ENCODE measurements at regions of chr14 and their contacts with region 1.

Region 1: DNA sequence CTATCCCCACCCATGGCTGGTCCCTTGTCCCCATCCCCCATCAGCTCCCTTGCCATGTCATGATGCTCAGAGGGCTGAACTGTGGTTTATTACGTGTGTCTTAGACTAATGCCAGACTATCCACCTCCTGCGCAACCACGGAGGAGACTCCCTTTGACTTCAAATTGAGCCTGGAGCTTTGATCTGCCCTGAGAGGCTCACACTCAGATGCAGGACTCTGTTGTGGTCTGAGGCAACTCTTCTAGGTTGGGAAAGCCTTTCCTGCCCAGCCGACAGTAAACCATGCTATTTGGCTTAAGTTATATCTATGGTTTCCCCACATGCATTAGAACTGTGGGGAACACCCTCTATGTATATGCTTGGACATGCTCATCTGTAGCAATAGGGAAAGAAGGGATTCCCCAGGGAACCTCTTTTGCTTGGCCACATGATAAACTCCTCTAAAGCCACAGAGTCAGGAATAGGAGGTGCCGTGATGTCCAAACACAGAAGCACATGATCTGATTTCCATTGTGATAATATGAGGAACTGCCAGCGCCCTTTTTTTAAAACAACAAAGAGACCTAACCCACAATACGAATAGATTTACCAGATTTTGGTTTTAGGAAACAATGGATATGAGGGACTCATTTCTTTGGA is 11.1 kb upstream of the LGALS3 start:
- DNase-seq: no peak
- H3K4me3 ChIP-seq: no peak overlapping the region
- H3K27ac ChIP-seq: no peak overlapping the region
- H3K4me1 ChIP-seq: peaks cover 0 to 3% (median 1%) of the 10 kb centered on the region in 4 experiments; a peak in 3 of 7 replicates
- H3K27me3 ChIP-seq: no peaks in the 10 kb centered on the region; a peak in 1 of 7 replicates
- CTCF ChIP-seq: no peak
- EP300 ChIP-seq: no peak
- POLR2A ChIP-seq: no peak
- RAD21 ChIP-seq: no peak

Region 2: GRCh38 chr14:55074662-55075061 is 43.3 kb before region 1 on chr14:
- CTCF ChIA-PET with region 1: no interaction called
- POLR2A ChIA-PET with region 1: no interaction called
- DNase-seq: peak in 1 of 2 experiments; percentile 43
- H3K4me3 ChIP-seq: no peak overlapping the region
- H3K27ac ChIP-seq: no peak overlapping the region
- H3K4me1 ChIP-seq: peaks cover 0 to 4% (median 1%) of the 10 kb centered on the region in 4 experiments; a peak in 4 of 7 replicates
- H3K27me3 ChIP-seq: no peaks in the 10 kb centered on the region
- CTCF ChIP-seq: no peak
- EP300 ChIP-seq: no peak
- POLR2A ChIP-seq: no peak
- RAD21 ChIP-seq: no peak

Region 3: DNA sequence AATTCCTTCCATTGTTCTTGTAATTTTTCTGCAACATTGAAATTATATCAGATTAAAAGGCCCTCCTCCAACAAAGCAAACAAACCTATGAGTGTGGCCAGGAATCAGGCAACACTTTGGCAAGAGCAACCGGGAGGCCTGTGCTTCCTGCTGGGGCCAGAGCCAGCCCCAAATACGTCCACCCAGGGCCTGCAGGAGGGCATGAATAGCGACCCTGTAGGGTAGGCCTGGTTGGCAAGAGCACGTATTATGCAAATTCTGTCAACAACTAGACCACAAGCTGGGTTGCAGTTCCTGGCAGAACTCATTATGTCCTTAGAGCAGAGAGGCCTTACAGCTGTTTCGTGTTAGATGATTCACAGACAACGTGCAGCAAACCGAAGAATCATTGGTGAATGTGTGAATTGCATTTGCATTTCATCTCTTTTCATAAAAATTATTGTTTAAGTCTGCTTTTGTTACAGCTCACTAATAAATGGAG is 15.7 kb before region 1 on chr14:
- CTCF ChIA-PET with region 1: interaction called, 3 read pairs
- POLR2A ChIA-PET with region 1: interaction called, 15 read pairs
- DNase-seq: peak in 1 of 2 experiments; percentile 49
- H3K4me3 ChIP-seq: peak overlapping the region in 1 of 4 experiments; percentile 34; a peak in 2 of 8 replicates
- H3K27ac ChIP-seq: no peak overlapping the region
- H3K4me1 ChIP-seq: peaks cover 7 to 19% (median 12%) of the 10 kb centered on the region in 4 experiments; a peak in 5 of 7 replicates
- H3K27me3 ChIP-seq: no peaks in the 10 kb centered on the region
- CTCF ChIP-seq: no peak
- EP300 ChIP-seq: no peak
- POLR2A ChIP-seq: peak in 1 of 2 experiments; percentile 49; a peak in 1 of 3 replicates
- RAD21 ChIP-seq: no peak

Region 4: GRCh38 chr14:55146425-55146824 is 28.5 kb after region 1 on chr14:
- CTCF ChIA-PET with region 1: no interaction called
- POLR2A ChIA-PET with region 1: no interaction called
- DNase-seq: no peak
- H3K4me3 ChIP-seq: no peak overlapping the region
- H3K27ac ChIP-seq: no peak overlapping the region
- H3K4me1 ChIP-seq: no peaks in the 10 kb centered on the region
- H3K27me3 ChIP-seq: no peaks in the 10 kb centered on the region
- CTCF ChIP-seq: no peak
- EP300 ChIP-seq: no peak
- POLR2A ChIP-seq: no peak
- RAD21 ChIP-seq: no peak

Region 5: GRCh38 chr14:55160989-55161388 is 43.1 kb after region 1 on chr14:
- CTCF ChIA-PET with region 1: no interaction called
- POLR2A ChIA-PET with region 1: no interaction called
- DNase-seq: no peak
- H3K4me3 ChIP-seq: no peak overlapping the region
- H3K27ac ChIP-seq: no peak overlapping the region
- H3K4me1 ChIP-seq: no peaks in the 10 kb centered on the region
- H3K27me3 ChIP-seq: no peaks in the 10 kb centered on the region
- CTCF ChIP-seq: no peak
- EP300 ChIP-seq: no peak
- POLR2A ChIP-seq: no peak
- RAD21 ChIP-seq: peak in 1 of 2 experiments; percentile 18; a peak in 1 of 4 replicates

Region 6: GRCh38 chr14:55306938-55307589 is 189.1 kb after region 1 on chr14:
- CTCF ChIA-PET with region 1: no interaction called
- POLR2A ChIA-PET with region 1: no interaction called
- DNase-seq: no peak
- H3K4me3 ChIP-seq: no peak overlapping the region; a peak in 1 of 8 replicates
- H3K27ac ChIP-seq: no peak overlapping the region
- H3K4me1 ChIP-seq: peaks cover 0 to 4% (median 2%) of the 10 kb centered on the region in 4 experiments; a peak in 5 of 7 replicates
- H3K27me3 ChIP-seq: no peaks in the 10 kb centered on the region
- CTCF ChIP-seq: no peak
- EP300 ChIP-seq: no peak
- POLR2A ChIP-seq: no peak
- RAD21 ChIP-seq: no peak